CD8-positive, alpha-beta memory T cell (primary cell): ENCODE measurements at regions of chr11 and their contacts with region 1.

Region 1: DNA sequence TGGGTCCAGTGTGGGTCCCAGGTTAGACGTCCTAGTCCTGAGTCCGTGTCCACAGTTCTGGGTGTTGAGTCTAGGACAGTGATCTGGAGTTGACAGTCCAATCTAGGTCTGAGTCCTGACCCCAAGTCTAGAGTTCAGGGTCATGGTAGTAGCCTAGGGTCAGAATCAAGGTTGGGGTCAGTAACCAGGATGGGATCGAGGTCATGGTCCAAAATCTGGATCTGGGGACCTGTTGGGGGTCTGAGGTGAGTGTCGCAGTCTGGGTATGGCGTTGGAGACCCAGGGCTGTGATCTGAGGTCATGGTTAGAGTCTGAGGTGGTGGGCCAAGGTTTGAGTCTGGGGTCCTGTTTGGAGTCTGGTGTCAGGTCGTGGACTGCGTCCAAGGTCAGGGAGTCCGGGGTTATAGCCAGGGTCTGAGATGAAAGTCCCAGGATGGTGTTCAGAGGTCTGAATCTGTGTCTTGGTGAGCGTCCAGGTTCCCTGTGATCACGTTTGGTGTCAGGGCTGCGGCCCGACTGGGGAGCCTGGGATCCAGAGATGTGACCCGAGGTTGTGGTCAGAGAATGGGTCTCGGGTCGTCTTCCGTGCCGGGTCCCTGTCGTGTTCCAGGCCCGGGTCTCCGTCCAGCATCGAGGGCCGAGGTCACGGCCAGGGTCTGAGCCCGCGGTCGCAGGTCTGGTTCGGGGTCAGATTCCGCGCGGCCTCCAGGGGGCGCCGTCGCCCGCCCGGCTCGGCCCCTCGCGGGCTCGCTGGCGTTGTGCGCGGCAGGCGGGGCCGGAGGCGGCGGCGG is 445 bp upstream of the GRK2 start:
- DNase-seq: peak; percentile 69 to 80 (median 75)
- H3K4me3 ChIP-seq: no peak overlapping the region
- H3K4me3 Mint-ChIP-seq: peak overlapping the region; percentile 80 to 95 (median 85)
- H3K27ac ChIP-seq: peak overlapping the region; percentile 17
- H3K27ac Mint-ChIP-seq: peak overlapping the region; percentile 80 to 93 (median 88)
- H3K4me1 ChIP-seq: peaks cover 63% of the 10 kb centered on the region
- H3K4me1 Mint-ChIP-seq: peaks cover 53 to 82% (median 65%) of the 10 kb centered on the region in 3 donors
- H3K27me3 ChIP-seq: no peaks in the 10 kb centered on the region
- H3K27me3 Mint-ChIP-seq: peaks cover 3 to 8% of the 10 kb centered on the region in 2 donors

Region 2: DNA sequence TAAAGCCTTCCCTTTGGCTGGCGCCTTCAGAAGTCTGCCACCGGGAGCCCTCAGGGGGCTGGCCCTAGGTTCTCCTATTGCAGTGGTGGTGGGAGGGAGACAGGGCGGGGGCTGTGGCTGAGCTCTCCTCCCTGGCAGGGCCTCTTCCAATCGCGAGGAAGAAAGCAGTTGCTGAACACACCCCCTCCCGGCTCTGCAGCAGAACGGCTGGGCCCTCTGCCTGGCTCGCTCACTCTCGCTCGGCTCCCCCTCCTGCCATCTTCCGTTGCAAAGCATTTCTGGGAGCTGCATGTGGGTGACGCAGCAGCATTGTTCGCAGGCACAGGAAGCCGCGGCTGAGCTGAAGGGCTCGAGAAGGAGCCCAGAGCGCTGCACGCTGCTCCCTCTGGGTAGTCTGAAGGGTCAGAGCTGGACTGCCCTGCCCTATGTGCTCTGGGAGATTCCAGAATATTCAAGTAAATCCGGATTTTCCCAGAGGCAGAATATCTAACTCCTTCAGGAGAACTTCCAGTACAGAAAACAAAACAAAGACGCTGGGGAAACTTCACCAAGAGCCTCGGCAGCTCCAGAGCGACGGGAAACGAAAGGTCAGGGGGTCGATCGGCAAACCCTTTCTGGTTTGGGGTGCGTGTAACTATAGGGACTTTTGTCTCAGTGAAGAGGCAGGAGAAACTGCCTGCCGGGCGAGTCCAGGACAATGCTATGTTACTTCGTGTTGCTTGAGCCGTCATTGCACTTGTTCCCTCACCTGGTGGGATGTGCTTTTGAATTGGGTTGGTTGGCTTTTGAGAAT is 25.8 kb before region 1 on chr11:
- CTCF ChIA-PET with region 1: interaction called, 6 read pairs
- POLR2A ChIA-PET with region 1: interaction called, 16 read pairs
- DNase-seq: peak; percentile 94 to 98 (median 97)
- H3K4me3 ChIP-seq: peak overlapping the region; percentile 98
- H3K4me3 Mint-ChIP-seq: peak overlapping the region; percentile 94 to 100 (median 99)
- H3K27ac ChIP-seq: peak overlapping the region; percentile 99
- H3K27ac Mint-ChIP-seq: peak overlapping the region; percentile 97 to 100 (median 99)
- H3K4me1 ChIP-seq: peaks cover 48% of the 10 kb centered on the region
- H3K4me1 Mint-ChIP-seq: peaks cover 50 to 58% (median 57%) of the 10 kb centered on the region in 3 donors
- H3K27me3 ChIP-seq: no peaks in the 10 kb centered on the region
- H3K27me3 Mint-ChIP-seq: peaks cover 0 to 4% of the 10 kb centered on the region in 2 donors

Region 3: GRCh38 chr11:67277231-67277961 is 11.6 kb after region 1 on chr11:
- CTCF ChIA-PET with region 1: interaction called, 31 read pairs
- POLR2A ChIA-PET with region 1: interaction called, 283 read pairs
- DNase-seq: peak; percentile 87 to 95 (median 94)
- H3K4me3 ChIP-seq: peak overlapping the region; percentile 62
- H3K4me3 Mint-ChIP-seq: peak overlapping the region; percentile 75 to 89 (median 81)
- H3K27ac ChIP-seq: peak overlapping the region; percentile 89
- H3K27ac Mint-ChIP-seq: peak overlapping the region; percentile 86 to 99 (median 98)
- H3K4me1 ChIP-seq: peaks cover 88% of the 10 kb centered on the region
- H3K4me1 Mint-ChIP-seq: peaks cover 61 to 79% (median 68%) of the 10 kb centered on the region in 3 donors
- H3K27me3 ChIP-seq: no peaks in the 10 kb centered on the region
- H3K27me3 Mint-ChIP-seq: no peaks in the 10 kb centered on the region

Region 4: DNA sequence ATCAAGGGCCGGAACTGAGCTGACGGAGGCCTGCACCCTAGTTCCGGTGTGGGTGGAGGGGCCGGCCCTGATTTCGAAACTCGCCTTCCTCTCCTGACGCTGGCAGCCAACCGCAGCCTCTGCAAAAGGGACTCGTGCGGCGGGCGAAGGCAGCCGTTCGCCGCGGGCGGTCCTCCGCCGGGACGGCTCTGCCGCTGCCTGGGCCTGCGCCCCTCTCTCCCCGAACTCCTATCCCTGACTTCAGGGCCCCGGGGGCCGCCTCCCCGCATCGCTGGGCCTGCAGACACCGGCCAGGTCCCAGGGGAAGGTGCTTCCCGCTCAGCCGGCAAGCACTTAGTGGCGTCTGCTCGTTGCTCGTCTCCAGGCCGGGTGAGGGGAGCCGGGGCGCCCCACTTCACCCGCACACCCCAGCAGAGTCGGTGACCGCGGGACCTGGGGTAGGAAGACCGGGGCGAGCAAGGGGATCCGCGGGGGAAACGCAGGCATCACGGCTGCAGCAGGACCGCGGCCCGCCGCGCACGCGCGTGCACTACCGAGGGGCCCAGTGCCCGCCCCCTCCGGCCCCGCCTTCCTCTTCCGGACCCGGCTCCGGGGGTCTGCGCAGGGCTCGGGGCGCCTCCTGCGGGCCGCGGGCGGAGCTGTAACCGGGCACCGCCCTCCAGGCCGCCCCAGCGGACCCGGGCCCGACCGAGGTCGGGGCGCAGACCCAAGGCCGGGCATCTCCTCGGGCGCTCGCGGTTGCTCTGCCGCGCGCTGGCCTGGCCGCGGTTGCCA is 22.8 kb after region 1 on chr11:
- CTCF ChIA-PET with region 1: interaction called, 114 read pairs
- POLR2A ChIA-PET with region 1: interaction called, 283 read pairs
- DNase-seq: peak; percentile 86 to 94 (median 91)
- H3K4me3 ChIP-seq: peak overlapping the region; percentile 92
- H3K4me3 Mint-ChIP-seq: peak overlapping the region; percentile 74 to 91 (median 76)
- H3K27ac ChIP-seq: peak overlapping the region; percentile 88
- H3K27ac Mint-ChIP-seq: peak overlapping the region; percentile 86 to 100 (median 99)
- H3K4me1 ChIP-seq: peaks cover 71% of the 10 kb centered on the region
- H3K4me1 Mint-ChIP-seq: peaks cover 50 to 75% (median 51%) of the 10 kb centered on the region in 3 donors
- H3K27me3 ChIP-seq: no peaks in the 10 kb centered on the region
- H3K27me3 Mint-ChIP-seq: peaks cover 0 to 2% of the 10 kb centered on the region in 2 donors

Region 5: GRCh38 chr11:67309166-67310061 is 43.6 kb after region 1 on chr11:
- CTCF ChIA-PET with region 1: interaction called, 94 read pairs
- POLR2A ChIA-PET with region 1: interaction called, 4 read pairs
- DNase-seq: no peak
- H3K4me3 ChIP-seq: no peak overlapping the region
- H3K4me3 Mint-ChIP-seq: no peak overlapping the region
- H3K27ac ChIP-seq: no peak overlapping the region
- H3K27ac Mint-ChIP-seq: peak overlapping the region in 2 of 8 donors; percentile 42 to 87
- H3K4me1 ChIP-seq: peaks cover 31% of the 10 kb centered on the region
- H3K4me1 Mint-ChIP-seq: peaks cover 34 to 46% (median 37%) of the 10 kb centered on the region in 3 donors
- H3K27me3 ChIP-seq: no peaks in the 10 kb centered on the region
- H3K27me3 Mint-ChIP-seq: peaks cover 0 to 2% of the 10 kb centered on the region in 2 donors

Region 6: GRCh38 chr11:67345920-67346799 is 80.3 kb after region 1 on chr11:
- CTCF ChIA-PET with region 1: interaction called, 24 read pairs
- POLR2A ChIA-PET with region 1: no interaction called
- DNase-seq: peak in 1 of 5 donors; percentile 43
- H3K4me3 ChIP-seq: no peak overlapping the region
- H3K4me3 Mint-ChIP-seq: no peak overlapping the region
- H3K27ac ChIP-seq: no peak overlapping the region
- H3K27ac Mint-ChIP-seq: peak overlapping the region in 4 of 8 donors; percentile 1 to 63 (median 47)
- H3K4me1 ChIP-seq: peaks cover 37% of the 10 kb centered on the region
- H3K4me1 Mint-ChIP-seq: peaks cover 16 to 47% (median 40%) of the 10 kb centered on the region in 3 donors
- H3K27me3 ChIP-seq: no peaks in the 10 kb centered on the region
- H3K27me3 Mint-ChIP-seq: no peaks in the 10 kb centered on the region

Region 7: GRCh38 chr11:67382276-67383136 is 116.7 kb after region 1 on chr11:
- CTCF ChIA-PET with region 1: interaction called, 14 read pairs
- POLR2A ChIA-PET with region 1: interaction called, 3 read pairs
- DNase-seq: peak; percentile 76 to 88 (median 77)
- H3K4me3 ChIP-seq: no peak overlapping the region
- H3K4me3 Mint-ChIP-seq: no peak overlapping the region
- H3K27ac ChIP-seq: no peak overlapping the region
- H3K27ac Mint-ChIP-seq: peak overlapping the region in 6 of 8 donors; percentile 2 to 80 (median 72)
- H3K4me1 ChIP-seq: peaks cover 8% of the 10 kb centered on the region
- H3K4me1 Mint-ChIP-seq: peaks cover 5 to 16% (median 11%) of the 10 kb centered on the region in 3 donors
- H3K27me3 ChIP-seq: peaks cover 5% of the 10 kb centered on the region
- H3K27me3 Mint-ChIP-seq: peaks cover 0 to 3% of the 10 kb centered on the region in 2 donors